ENCODE measurements at regions of chr5 and their contacts with region 1.

Region 1: DNA sequence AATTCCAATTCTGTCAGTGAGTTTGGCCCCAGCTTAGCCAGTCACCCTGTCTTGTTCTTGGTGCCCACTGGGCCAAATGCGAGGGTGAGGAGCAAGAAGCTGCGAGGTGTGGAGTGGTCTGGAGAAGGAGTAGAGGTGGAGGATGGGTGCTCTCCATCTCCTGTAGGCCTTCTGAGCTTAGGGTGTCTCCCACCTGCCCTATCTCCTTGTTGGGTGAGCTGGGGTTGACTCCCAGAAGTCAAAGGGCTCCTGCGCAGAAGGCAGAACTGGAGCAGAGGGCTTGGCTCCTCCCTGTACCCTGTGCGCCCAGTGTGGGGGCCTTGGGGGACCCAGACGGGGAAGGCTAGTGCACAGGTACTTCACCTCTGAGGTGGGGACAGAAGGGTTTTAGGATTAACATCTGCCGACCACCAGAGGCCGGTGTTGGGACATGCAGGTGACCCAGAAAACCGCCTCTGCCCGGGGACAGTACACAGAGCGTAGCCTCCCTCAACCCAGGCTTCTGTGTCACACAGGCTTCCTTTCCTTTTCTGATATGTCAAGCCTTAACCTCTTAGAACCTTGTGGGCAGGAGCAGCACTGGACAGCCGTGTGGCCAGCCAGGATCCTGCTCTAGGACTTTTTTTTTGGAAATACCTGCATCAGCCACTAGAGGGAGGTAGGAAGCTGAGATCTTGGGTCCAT is 16.9 kb downstream of the IL5 start:
- DNase-seq: peak; percentile 36
- H3K4me3 Mint-ChIP-seq: no peak overlapping the region
- H3K27ac Mint-ChIP-seq: peak overlapping the region; percentile 31
- H3K4me1 Mint-ChIP-seq: peaks cover 54% of the 10 kb centered on the region
- H3K27me3 Mint-ChIP-seq: no peaks in the 10 kb centered on the region

Region 2: GRCh38 chr5:132260714-132261551 is 265.5 kb before region 1 on chr5:
- intact Hi-C with region 1: no loop called
- DNase-seq: no peak
- H3K4me3 Mint-ChIP-seq: peak overlapping the region; percentile 31
- H3K27ac Mint-ChIP-seq: peak overlapping the region; percentile 64
- H3K4me1 Mint-ChIP-seq: peaks cover 50% of the 10 kb centered on the region
- H3K27me3 Mint-ChIP-seq: peaks cover 10% of the 10 kb centered on the region

Region 3: DNA sequence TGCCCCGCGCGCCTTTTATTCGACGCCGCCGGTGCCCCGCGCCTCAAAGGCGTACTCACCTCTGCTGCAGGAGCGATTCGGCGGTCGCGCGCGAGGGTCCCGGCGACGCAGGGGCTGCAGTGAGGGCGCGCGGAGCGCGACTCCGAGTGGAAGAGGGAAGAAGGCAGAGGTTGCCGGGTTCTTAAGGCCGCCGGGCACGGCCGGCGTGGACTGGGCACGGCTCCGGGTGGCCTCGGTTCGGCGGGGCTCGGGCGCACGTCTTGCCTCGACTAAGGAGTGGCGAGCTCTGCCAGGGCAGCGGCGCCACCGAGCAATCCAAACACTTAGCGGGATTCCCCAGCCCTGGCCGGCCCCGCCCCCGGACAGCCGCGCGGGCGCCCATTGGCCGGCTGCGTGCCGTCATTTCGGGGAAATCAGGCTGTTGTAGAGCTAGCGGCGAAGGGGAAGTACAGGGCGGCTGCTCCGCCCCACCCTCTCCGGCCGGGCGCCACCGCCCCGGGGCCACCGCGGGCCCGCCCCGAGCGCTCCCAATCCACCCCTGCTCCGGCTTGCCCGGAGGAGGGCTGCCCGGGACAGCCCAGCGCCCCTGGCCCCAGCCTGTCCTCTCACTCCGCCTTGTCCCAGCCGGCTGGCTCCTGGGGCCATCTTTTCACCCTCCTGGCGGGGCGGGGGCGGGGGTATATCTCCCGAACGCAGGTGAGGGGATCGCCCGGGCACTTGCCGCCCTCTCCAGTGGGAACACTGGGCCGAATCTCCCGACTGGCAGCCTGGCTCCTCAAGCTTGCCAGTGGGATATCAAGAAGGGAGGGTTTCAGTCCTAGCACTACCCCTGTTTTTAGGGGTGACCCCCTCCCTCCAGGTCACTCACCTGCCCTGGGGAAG is 35.7 kb before region 1 on chr5 and contains the start of gene IRF1:
- intact Hi-C with region 1: no loop called
- DNase-seq: peak; percentile 99
- H3K4me3 Mint-ChIP-seq: peak within 1 kb of the TSS; percentile 95
- H3K27ac Mint-ChIP-seq: peak within 1 kb of the TSS; percentile 81
- H3K4me1 Mint-ChIP-seq: peaks cover 71% of the 10 kb centered on the region
- H3K27me3 Mint-ChIP-seq: no peaks in the 10 kb centered on the region
- total RNA-seq, gene IRF1: 155 TPM in 2 replicates

Region 4: GRCh38 chr5:132546108-132546507 is 19.7 kb after region 1 on chr5:
- intact Hi-C with region 1: loop called (anchors 1 kb)
- DNase-seq: no peak
- H3K4me3 Mint-ChIP-seq: no peak overlapping the region
- H3K27ac Mint-ChIP-seq: peak overlapping the region; percentile 41
- H3K4me1 Mint-ChIP-seq: peaks cover 61% of the 10 kb centered on the region
- H3K27me3 Mint-ChIP-seq: peaks cover 6% of the 10 kb centered on the region

Region 5: GRCh38 chr5:132662925-132663770 is 136.7 kb after region 1 on chr5:
- intact Hi-C with region 1: loop called (anchors 1 kb)
- DNase-seq: no peak
- H3K4me3 Mint-ChIP-seq: no peak overlapping the region
- H3K27ac Mint-ChIP-seq: peak overlapping the region; percentile 92
- H3K4me1 Mint-ChIP-seq: peaks cover 74% of the 10 kb centered on the region
- H3K27me3 Mint-ChIP-seq: no peaks in the 10 kb centered on the region

Region 6: GRCh38 chr5:132714456-132715307 is 188.2 kb after region 1 on chr5:
- intact Hi-C with region 1: loop called (anchors 5 kb)
- DNase-seq: no peak
- H3K4me3 Mint-ChIP-seq: no peak overlapping the region
- H3K27ac Mint-ChIP-seq: peak overlapping the region; percentile 9
- H3K4me1 Mint-ChIP-seq: peaks cover 18% of the 10 kb centered on the region
- H3K27me3 Mint-ChIP-seq: no peaks in the 10 kb centered on the region

Region 7: GRCh38 chr5:132753135-132753987 is 226.9 kb after region 1 on chr5:
- intact Hi-C with region 1: loop called (anchors 1 kb)
- DNase-seq: no peak
- H3K4me3 Mint-ChIP-seq: no peak overlapping the region
- H3K27ac Mint-ChIP-seq: peak overlapping the region; percentile 5
- H3K4me1 Mint-ChIP-seq: peaks cover 42% of the 10 kb centered on the region
- H3K27me3 Mint-ChIP-seq: peaks cover 4% of the 10 kb centered on the region